ENCODE measurements at regions of chr14 and their contacts with region 1.

Region 1: DNA sequence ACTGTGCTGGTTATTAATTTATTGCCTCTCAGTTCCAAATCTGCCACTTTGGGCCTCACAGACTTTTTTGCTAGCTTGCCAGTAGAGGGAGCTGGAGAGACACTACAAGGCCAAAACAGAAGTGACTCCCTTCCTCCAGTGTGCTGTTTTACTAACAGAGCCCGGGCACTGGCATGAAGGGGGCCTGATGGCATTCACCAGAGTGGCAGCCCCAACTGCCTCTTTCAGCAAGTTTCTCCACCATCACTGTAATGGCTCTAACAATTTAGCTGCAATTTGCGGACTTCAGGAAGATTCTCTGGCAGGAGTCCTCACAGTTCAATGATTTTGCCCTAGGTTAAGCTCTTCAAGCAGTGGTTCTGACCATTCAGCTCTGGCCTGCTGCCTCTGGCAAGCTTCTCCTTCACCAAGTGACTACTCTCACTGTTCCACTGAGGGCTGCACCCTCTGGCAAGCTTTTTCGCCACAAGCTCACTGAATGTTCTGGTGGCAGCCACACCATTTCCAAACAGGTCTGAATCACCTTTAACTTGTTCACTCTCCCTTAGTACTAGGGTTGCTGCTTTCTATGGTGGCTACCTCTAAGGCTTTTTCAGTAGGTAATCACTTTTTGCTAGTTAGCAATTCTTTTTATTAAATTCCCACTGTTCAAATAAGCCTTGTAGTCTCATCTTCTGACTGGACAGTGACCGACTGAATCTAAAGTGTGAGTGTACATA is 104.9 kb downstream of the ZC3H14 start:
- DNase-seq: peak; percentile 54
- H3K4me3 Mint-ChIP-seq: no peak overlapping the region
- H3K27ac Mint-ChIP-seq: no peak overlapping the region
- H3K4me1 Mint-ChIP-seq: no peaks in the 10 kb centered on the region
- H3K27me3 Mint-ChIP-seq: no peaks in the 10 kb centered on the region

Region 2: DNA sequence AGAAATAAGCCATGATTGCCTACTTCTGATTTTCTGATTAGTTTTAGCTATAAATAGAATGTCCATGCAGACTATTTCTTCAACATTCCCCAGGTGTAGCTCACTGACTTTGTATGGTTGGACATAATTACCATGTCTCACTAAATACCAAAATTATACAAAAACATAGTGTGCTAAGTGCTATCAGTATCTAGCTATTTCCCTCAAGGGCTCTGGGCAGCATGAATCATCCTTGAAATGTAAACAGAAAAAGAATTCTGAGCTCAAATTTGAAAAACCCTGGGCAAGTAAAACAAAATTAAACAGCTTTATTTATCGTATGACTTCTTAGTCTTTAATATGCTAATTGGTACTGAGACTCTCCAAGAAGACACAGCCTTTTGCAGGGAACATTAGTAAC is 199.3 kb before region 1 on chr14:
- CTCF ChIA-PET with region 1: no interaction called
- POLR2A ChIA-PET with region 1: no interaction called
- intact Hi-C with region 1: no loop called
- DNase-seq: no peak
- H3K4me3 Mint-ChIP-seq: no peak overlapping the region
- H3K27ac Mint-ChIP-seq: no peak overlapping the region
- H3K4me1 Mint-ChIP-seq: no peaks in the 10 kb centered on the region
- H3K27me3 Mint-ChIP-seq: no peaks in the 10 kb centered on the region

Region 3: GRCh38 chr14:88630565-88630964 is 37.1 kb before region 1 on chr14:
- CTCF ChIA-PET with region 1: interaction called, 10 read pairs
- POLR2A ChIA-PET with region 1: no interaction called
- intact Hi-C with region 1: no loop called
- DNase-seq: no peak
- H3K4me3 Mint-ChIP-seq: no peak overlapping the region
- H3K27ac Mint-ChIP-seq: no peak overlapping the region
- H3K4me1 Mint-ChIP-seq: no peaks in the 10 kb centered on the region
- H3K27me3 Mint-ChIP-seq: no peaks in the 10 kb centered on the region

Region 4: DNA sequence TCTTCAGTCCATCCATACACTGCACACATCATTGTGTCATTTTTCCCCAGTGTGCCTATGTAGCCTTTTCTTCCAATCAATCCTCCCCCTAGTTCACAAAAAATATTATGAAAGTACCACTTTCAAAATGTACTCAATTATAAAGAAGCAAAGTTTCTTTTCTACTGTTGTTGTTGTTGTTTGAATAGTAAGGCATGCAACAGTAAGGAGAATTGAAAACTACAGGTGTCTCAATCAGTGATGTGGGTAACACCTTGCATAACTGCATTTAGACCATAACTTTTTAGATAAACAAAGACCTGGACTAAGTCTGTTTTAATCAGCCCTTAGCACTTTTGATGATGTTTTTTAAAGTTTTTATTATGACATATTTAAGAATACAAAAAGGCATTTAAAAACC is 20.7 kb after region 1 on chr14:
- CTCF ChIA-PET with region 1: interaction called, 11 read pairs
- POLR2A ChIA-PET with region 1: no interaction called
- intact Hi-C with region 1: no loop called
- DNase-seq: no peak
- H3K4me3 Mint-ChIP-seq: no peak overlapping the region
- H3K27ac Mint-ChIP-seq: no peak overlapping the region
- H3K4me1 Mint-ChIP-seq: no peaks in the 10 kb centered on the region
- H3K27me3 Mint-ChIP-seq: no peaks in the 10 kb centered on the region

Region 5: GRCh38 chr14:88792572-88793258 is 125.0 kb after region 1 on chr14 and contains the start of gene EML5:
- CTCF ChIA-PET with region 1: interaction called, 8 read pairs
- POLR2A ChIA-PET with region 1: no interaction called
- intact Hi-C with region 1: loop called (anchors 1 kb)
- DNase-seq: peak; percentile 87
- H3K4me3 Mint-ChIP-seq: peak within 1 kb of the TSS; percentile 89
- H3K27ac Mint-ChIP-seq: peak within 1 kb of the TSS; percentile 74
- H3K4me1 Mint-ChIP-seq: peaks cover 25% of the 10 kb centered on the region
- H3K27me3 Mint-ChIP-seq: peaks cover 3% of the 10 kb centered on the region
- total RNA-seq, gene EML5: 5.7 to 6.2 TPM

Region 6: GRCh38 chr14:88824314-88825077 is 156.8 kb after region 1 on chr14 and contains the start of gene TTC8:
- CTCF ChIA-PET with region 1: interaction called, 12 read pairs
- POLR2A ChIA-PET with region 1: interaction called, 3 read pairs
- intact Hi-C with region 1: no loop called
- DNase-seq: peak; percentile 87
- H3K4me3 Mint-ChIP-seq: peak within 1 kb of the TSS; percentile 94
- H3K27ac Mint-ChIP-seq: peak within 1 kb of the TSS; percentile 94
- H3K4me1 Mint-ChIP-seq: peaks cover 10% of the 10 kb centered on the region
- H3K27me3 Mint-ChIP-seq: peaks cover 3% of the 10 kb centered on the region
- total RNA-seq, gene TTC8: 3.3 to 4.9 TPM

Region 7: DNA sequence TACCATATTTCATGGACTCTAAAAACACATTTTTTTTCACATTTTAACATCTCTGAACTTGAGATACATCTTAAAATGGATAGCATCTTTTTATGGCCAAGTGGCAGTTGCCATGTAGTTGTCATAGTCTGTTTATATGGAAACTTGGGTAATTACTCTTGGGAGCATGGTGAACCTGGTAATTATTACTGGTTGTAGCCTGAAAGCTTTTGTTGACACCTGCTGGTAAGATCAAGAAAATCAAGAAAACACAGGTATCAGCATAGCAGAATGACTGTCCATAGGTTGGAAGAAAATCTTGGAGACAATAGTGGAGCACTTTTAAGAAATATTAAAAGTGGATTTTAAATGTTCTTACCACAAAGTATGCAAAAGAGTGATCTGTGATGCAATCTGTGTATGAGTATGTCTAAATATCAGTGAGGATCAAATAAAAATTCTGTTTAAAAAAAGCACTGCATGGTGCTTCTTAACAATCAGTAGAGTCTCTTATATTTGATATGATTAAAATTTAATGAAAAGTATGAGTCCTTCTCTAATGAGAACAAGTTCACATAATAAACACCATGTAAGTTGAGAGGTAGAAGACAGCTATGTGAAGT is 200.9 kb after region 1 on chr14:
- CTCF ChIA-PET with region 1: interaction called, 35 read pairs
- POLR2A ChIA-PET with region 1: no interaction called
- intact Hi-C with region 1: loop called (anchors 1 kb)
- DNase-seq: no peak
- H3K4me3 Mint-ChIP-seq: no peak overlapping the region
- H3K27ac Mint-ChIP-seq: no peak overlapping the region
- H3K4me1 Mint-ChIP-seq: no peaks in the 10 kb centered on the region
- H3K27me3 Mint-ChIP-seq: no peaks in the 10 kb centered on the region

Region 8: GRCh38 chr14:89013084-89013504 is 345.4 kb after region 1 on chr14:
- CTCF ChIA-PET with region 1: interaction called, 4 read pairs
- POLR2A ChIA-PET with region 1: no interaction called
- intact Hi-C with region 1: loop called (anchors 1 kb)
- DNase-seq: peak; percentile 48
- H3K4me3 Mint-ChIP-seq: no peak overlapping the region
- H3K27ac Mint-ChIP-seq: no peak overlapping the region
- H3K4me1 Mint-ChIP-seq: no peaks in the 10 kb centered on the region
- H3K27me3 Mint-ChIP-seq: peaks cover 12% of the 10 kb centered on the region

Measured in activated CD4-positive, alpha-beta memory T cell treated with anti-CD3 and anti-CD28 coated beads for 36 hours (primary cell).